H1 (cell line): ENCODE measurements at regions of chr7 and their contacts with region 1.

Region 1: GRCh38 chr7:151304856-151305255 is 36.8 kb upstream of the NUB1 start:
- DNase-seq: peak; percentile 15 to 43
- H3K4me3 ChIP-seq: peak overlapping the region; percentile 43 to 55 (median 50); a peak in 7 of 8 replicates
- H3K27ac ChIP-seq: no peak overlapping the region
- H3K4me1 ChIP-seq: peaks cover 0 to 3% (median 2%) of the 10 kb centered on the region in 4 experiments; a peak in 4 of 7 replicates
- H3K27me3 ChIP-seq: peaks cover 0 to 6% (median 2%) of the 10 kb centered on the region in 4 experiments; a peak in 4 of 7 replicates
- CTCF ChIP-seq: no peak
- EP300 ChIP-seq: no peak
- POLR2A ChIP-seq: 0 out of 3 replicates have a peak, but pooled peaks of 1 of the 2 experiments have one; percentile 36
- RAD21 ChIP-seq: no peak

Region 2: DNA sequence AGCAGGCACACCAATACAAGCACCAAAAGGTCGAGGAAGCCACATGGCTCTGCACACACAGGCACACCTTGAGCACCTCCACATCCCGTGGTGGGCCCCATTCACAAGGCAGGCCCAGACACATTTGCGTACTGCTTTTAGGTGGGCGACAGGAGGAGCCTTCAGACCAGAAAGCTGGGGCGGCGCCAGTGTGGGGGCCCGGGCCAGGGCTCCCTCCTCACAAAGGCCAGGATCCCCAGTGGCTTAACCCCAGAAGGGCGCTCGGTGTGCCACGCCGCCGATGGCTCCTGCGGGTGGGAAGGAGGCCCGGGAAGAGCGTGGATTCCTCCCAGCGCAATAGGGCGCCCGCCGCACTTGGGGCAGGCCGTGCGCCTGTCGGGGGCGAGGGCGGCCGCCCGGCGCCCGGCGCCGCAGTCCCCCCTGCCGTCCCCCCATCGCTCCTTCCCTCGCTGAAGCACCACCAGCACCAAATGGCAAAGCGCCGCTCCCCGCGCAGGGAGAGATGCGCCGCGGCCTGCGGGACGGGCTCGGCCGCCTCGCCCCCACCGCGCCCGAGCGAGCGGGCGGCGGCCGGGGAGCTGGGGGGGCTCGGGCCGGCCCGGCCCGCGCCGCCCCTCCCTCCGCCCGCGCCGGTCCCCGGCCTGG is 53.4 kb before region 1 on chr7:
- CTCF ChIA-PET with region 1: interaction called, 14 read pairs
- POLR2A ChIA-PET with region 1: interaction called, 6 read pairs
- DNase-seq: peak in 1 of 2 experiments; percentile 62
- H3K4me3 ChIP-seq: peak overlapping the region; percentile 45 to 81 (median 66)
- H3K27ac ChIP-seq: no peak overlapping the region
- H3K4me1 ChIP-seq: peaks cover 0 to 48% (median 32%) of the 10 kb centered on the region in 4 experiments; a peak in 6 of 7 replicates
- H3K27me3 ChIP-seq: peaks cover 16 to 63% (median 52%) of the 10 kb centered on the region in 4 experiments
- CTCF ChIP-seq: no peak
- EP300 ChIP-seq: no peak
- POLR2A ChIP-seq: no peak
- RAD21 ChIP-seq: no peak

Region 3: DNA sequence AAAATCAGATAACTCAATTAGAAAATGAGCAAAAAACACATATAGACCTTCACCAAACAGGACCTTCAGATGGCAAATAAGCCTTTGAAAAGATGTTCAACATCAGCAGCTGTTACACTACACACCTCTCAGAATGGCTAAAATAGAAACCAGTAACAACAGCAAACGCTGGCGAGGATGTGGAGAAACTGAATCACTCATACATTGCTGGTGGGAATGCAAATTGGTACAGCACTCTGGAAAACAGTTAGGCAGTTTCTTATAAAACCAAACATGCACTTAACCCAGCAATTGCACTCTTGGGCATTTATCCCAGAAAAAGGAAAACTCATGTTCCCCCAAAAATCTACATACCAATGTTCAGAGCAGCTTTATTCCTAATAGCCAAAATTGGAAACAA is 18.7 kb before region 1 on chr7:
- CTCF ChIA-PET with region 1: interaction called, 11 read pairs
- POLR2A ChIA-PET with region 1: interaction called, 3 read pairs
- DNase-seq: no peak
- H3K4me3 ChIP-seq: no peak overlapping the region
- H3K27ac ChIP-seq: no peak overlapping the region
- H3K4me1 ChIP-seq: peaks cover 0 to 5% (median 0%) of the 10 kb centered on the region in 4 experiments; a peak in 1 of 7 replicates
- H3K27me3 ChIP-seq: no peaks in the 10 kb centered on the region
- CTCF ChIP-seq: no peak
- EP300 ChIP-seq: no peak
- POLR2A ChIP-seq: no peak
- RAD21 ChIP-seq: no peak

Region 4: GRCh38 chr7:151400626-151401315 is 95.9 kb after region 1 on chr7:
- CTCF ChIA-PET with region 1: no interaction called
- POLR2A ChIA-PET with region 1: no interaction called
- DNase-seq: no peak
- H3K4me3 ChIP-seq: no peak overlapping the region
- H3K27ac ChIP-seq: no peak overlapping the region
- H3K4me1 ChIP-seq: peaks cover 0 to 14% (median 9%) of the 10 kb centered on the region in 4 experiments; a peak in 6 of 7 replicates
- H3K27me3 ChIP-seq: no peaks in the 10 kb centered on the region
- CTCF ChIP-seq: peak in 1 of 3 experiments; percentile 10; a peak in 1 of 4 replicates
- EP300 ChIP-seq: 0 out of 3 replicates have a peak, but pooled peaks of 1 of the 2 experiments have one; percentile 11
- POLR2A ChIP-seq: no peak
- RAD21 ChIP-seq: no peak